AG04449 (cell line): ENCODE measurements at regions of chr14 and their contacts with region 1.

Region 1: GRCh38 chr14:51979088-51979709 is 10.1 kb upstream of the RTRAF start:
- DNase-seq: no peak
- H3K4me3 ChIP-seq: no peak overlapping the region
- CTCF ChIP-seq: peak; percentile 82

Region 2: DNA sequence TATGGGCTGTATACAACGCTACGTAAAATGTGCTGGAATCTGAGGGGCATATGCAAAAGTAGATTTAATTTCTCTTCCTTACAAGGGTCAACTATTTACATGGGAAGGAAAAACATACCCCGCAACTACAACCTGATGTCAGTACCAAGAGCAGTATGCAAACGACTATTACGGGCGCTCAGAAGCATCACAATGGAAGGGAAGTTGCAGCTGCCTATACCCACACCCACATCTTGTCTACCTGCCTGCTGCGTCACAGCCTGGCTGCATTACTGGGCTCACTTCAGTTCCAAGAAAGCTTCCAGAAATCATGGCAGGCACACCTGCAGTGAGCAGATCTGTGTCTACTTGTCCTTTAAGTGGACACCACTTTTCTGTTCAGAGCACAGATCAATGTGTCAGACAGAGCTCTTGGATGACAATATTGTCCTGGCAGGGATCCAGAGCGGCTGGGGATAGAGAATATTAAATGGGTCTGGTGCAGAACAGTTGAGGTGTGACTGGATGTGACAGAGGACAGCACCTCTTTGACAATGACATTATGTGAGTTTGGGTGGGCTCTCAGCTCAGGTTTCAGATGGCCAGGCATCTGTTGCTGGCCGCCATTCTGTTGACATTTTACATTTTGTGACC is 160.3 kb before region 1 on chr14:
- CTCF ChIA-PET with region 1: interaction called, 10 read pairs
- POLR2A ChIA-PET with region 1: no interaction called
- DNase-seq: no peak
- H3K4me3 ChIP-seq: no peak overlapping the region
- CTCF ChIP-seq: no peak

Region 3: GRCh38 chr14:51860164-51860824 is 118.9 kb before region 1 on chr14 and contains the start of gene GNG2:
- CTCF ChIA-PET with region 1: interaction called, 19 read pairs
- POLR2A ChIA-PET with region 1: no interaction called
- DNase-seq: no peak
- H3K4me3 ChIP-seq: peak within 1 kb of the TSS; percentile 60
- CTCF ChIP-seq: no peak

Region 4: GRCh38 chr14:51963286-51963685 is 15.9 kb before region 1 on chr14:
- CTCF ChIA-PET with region 1: interaction called, 143 read pairs
- POLR2A ChIA-PET with region 1: no interaction called
- DNase-seq: no peak
- H3K4me3 ChIP-seq: no peak overlapping the region; the same call in 1 of the 2 replicates
- CTCF ChIP-seq: no peak

Region 5: DNA sequence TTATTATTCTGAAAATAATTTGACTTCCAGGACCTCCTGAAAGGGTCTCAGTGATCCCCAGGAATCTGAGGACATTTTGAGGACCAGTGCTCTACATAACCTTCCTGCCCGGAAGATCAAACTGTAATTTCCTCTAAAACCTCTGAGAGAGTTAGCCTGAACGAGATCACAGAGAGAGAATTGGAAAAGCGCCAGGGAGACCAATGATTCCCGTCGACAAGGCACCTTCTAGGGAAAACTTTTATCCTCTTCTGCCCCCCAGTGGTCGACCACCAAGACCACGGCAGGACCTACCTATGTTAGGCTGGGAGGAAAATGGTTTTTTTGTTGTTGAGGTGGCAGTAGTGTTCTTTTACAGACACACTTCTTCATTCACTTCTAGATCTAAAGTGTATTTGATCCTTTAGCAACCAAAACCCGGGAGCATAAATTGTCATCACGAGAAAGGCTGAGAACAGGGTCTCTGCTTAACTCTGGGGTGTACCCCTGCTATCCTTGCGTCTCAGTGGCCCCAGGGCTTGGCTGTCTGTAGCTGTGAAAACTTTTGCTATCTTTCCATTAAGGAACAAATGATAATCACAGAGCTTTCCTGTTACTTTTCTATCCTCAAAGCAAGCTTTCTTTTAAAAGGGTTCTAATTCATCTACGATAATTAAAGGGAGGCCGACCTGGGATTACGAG is 152.6 kb after region 1 on chr14:
- CTCF ChIA-PET with region 1: interaction called, 38 read pairs
- POLR2A ChIA-PET with region 1: no interaction called
- DNase-seq: peak; percentile 72
- H3K4me3 ChIP-seq: no peak overlapping the region
- CTCF ChIP-seq: peak; percentile 78

Region 6: GRCh38 chr14:52351233-52352060 is 372.2 kb after region 1 on chr14:
- CTCF ChIA-PET with region 1: no interaction called
- POLR2A ChIA-PET with region 1: no interaction called
- DNase-seq: no peak
- H3K4me3 ChIP-seq: no peak overlapping the region
- CTCF ChIP-seq: no peak

Region 7: GRCh38 chr14:52596861-52597260 is 617.7 kb after region 1 on chr14:
- CTCF ChIA-PET with region 1: no interaction called
- POLR2A ChIA-PET with region 1: no interaction called
- DNase-seq: no peak
- H3K4me3 ChIP-seq: no peak overlapping the region
- CTCF ChIP-seq: no peak